GM12878 (cell line): ENCODE measurements at regions of chr1 and their contacts with region 1.

Region 1: DNA sequence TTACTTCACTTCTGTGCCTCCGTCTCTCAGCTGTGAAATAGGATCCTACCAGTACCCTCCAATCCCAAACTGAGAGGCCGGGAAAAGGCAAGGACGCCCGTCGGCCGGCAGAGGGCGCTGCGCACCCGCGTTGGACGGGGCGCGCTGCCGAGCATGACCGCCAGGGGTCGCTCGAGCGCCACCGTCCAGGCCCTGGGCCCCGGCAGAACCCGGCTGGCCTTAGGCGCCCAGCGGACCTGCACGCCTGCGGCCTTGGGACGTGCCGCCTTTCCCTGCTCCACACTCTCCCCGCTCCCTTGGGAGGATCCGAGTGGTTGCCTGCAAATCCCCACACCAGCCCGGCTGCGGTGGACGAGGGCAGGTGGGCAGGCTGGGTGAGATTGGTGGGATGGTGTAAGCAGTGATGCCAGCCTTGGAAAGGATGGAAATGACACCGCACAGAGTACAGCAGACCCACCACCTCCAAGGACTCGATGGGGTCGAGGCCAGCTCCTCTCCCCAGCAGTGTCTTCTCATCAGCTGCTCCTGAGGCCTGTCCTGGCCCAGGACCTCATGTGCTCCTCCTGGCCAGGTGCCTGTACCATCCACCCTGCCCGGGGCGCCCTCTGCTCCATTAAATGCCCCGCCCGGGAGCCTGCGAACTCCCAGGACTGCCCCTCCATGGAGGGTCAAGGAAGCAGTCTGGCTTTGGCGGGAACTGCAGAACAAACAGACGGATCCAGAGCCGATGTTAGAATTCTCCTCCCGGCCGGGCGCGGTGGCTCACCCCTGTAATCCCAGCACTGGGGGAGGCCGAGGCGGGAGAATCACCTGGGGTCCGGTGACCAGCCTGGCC is 47.4 kb upstream of the LBR start:
- DNase-seq: no peak
- ATAC-seq: peak; percentile 86
- H3K4me3 ChIP-seq: no peak overlapping the region
- H3K27ac ChIP-seq: no peak overlapping the region
- H3K4me1 ChIP-seq: peaks cover 21% of the 10 kb centered on the region
- H3K27me3 ChIP-seq: no peaks in the 10 kb centered on the region
- CTCF ChIP-seq: peak; percentile 99 to 100 (median 100); a peak in 5 of 6 replicates
- EP300 ChIP-seq: no peak
- POLR2A ChIP-seq: no peak
- RAD21 ChIP-seq: peak; percentile 99

Region 2: GRCh38 chr1:225413708-225414375 is 61.4 kb before region 1 on chr1:
- CTCF ChIA-PET with region 1: no interaction called
- POLR2A ChIA-PET with region 1: no interaction called
- RAD21 ChIA-PET with region 1: no interaction called
- SMC1A ChIA-PET with region 1: no interaction called
- in situ Hi-C with region 1: no loop called
- intact Hi-C with region 1: no loop called
- DNase-seq: no peak
- ATAC-seq: no peak; the same call in 2 of the 3 replicates
- H3K4me3 ChIP-seq: no peak overlapping the region
- H3K27ac ChIP-seq: no peak overlapping the region
- H3K4me1 ChIP-seq: no peaks in the 10 kb centered on the region
- H3K27me3 ChIP-seq: no peaks in the 10 kb centered on the region
- CTCF ChIP-seq: peak in 1 of 3 experiments; percentile 13; a peak in 1 of 6 replicates
- EP300 ChIP-seq: no peak
- POLR2A ChIP-seq: no peak
- RAD21 ChIP-seq: no peak

Region 3: DNA sequence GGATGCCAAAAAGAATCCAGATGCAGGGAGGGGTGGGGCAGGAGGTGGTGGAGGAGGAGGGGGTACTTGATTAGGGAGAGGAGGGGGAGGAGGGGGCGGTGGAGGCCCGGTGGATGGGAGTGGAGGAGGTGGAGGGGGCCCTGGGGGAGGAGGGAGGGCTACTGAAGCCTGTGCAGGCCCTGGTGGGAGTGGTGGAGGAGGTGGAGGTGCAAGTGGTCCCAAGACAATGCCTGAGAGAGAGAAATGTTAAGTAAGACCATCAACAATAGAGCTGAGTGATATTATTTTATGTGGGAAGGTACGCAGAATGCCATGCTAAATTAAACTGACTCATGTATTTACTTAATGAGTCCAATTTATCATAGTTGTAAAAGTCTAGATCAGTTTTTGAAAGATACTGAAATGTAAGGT is 39.5 kb after region 1 on chr1:
- CTCF ChIA-PET with region 1: no interaction called
- POLR2A ChIA-PET with region 1: no interaction called
- RAD21 ChIA-PET with region 1: no interaction called
- SMC1A ChIA-PET with region 1: no interaction called
- in situ Hi-C with region 1: no loop called
- intact Hi-C with region 1: no loop called
- DNase-seq: no peak
- ATAC-seq: no peak
- H3K4me3 ChIP-seq: no peak overlapping the region
- H3K27ac ChIP-seq: no peak overlapping the region
- H3K4me1 ChIP-seq: no peaks in the 10 kb centered on the region
- H3K27me3 ChIP-seq: peaks cover 0 to 3% of the 10 kb centered on the region in 2 experiments; a peak in 2 of 4 replicates
- CTCF ChIP-seq: no peak
- EP300 ChIP-seq: no peak
- POLR2A ChIP-seq: no peak
- RAD21 ChIP-seq: no peak

Region 4: GRCh38 chr1:225533238-225533637 is 58.0 kb after region 1 on chr1:
- CTCF ChIA-PET with region 1: no interaction called
- POLR2A ChIA-PET with region 1: no interaction called
- RAD21 ChIA-PET with region 1: no interaction called
- SMC1A ChIA-PET with region 1: no interaction called
- in situ Hi-C with region 1: no loop called
- intact Hi-C with region 1: no loop called
- DNase-seq: no peak
- ATAC-seq: no peak
- H3K4me3 ChIP-seq: no peak overlapping the region
- H3K27ac ChIP-seq: no peak overlapping the region
- H3K4me1 ChIP-seq: no peaks in the 10 kb centered on the region
- H3K27me3 ChIP-seq: no peaks in the 10 kb centered on the region
- CTCF ChIP-seq: no peak
- EP300 ChIP-seq: no peak
- POLR2A ChIP-seq: no peak
- RAD21 ChIP-seq: no peak

Region 5: GRCh38 chr1:225652729-225653462 is 177.7 kb after region 1 on chr1 and contains the start of gene ENAH:
- CTCF ChIA-PET with region 1: no interaction called
- POLR2A ChIA-PET with region 1: no interaction called
- RAD21 ChIA-PET with region 1: no interaction called
- SMC1A ChIA-PET with region 1: no interaction called
- in situ Hi-C with region 1: no loop called
- intact Hi-C with region 1: loop called (anchors 10 kb)
- DNase-seq: no peak
- ATAC-seq: peak; percentile 82
- H3K4me3 ChIP-seq: peak within 1 kb of the TSS; percentile 35
- H3K27ac ChIP-seq: no peak within 1 kb of the TSS
- H3K4me1 ChIP-seq: peaks cover 3% of the 10 kb centered on the region; the same call in 1 of the 2 replicates
- H3K27me3 ChIP-seq: peaks cover 6 to 15% of the 10 kb centered on the region in 2 experiments
- CTCF ChIP-seq: no peak
- EP300 ChIP-seq: no peak
- POLR2A ChIP-seq: no peak
- RAD21 ChIP-seq: no peak
- polyA plus RNA-seq, gene ENAH: not detected

Region 6: GRCh38 chr1:225777583-225778336 is 302.6 kb after region 1 on chr1 and contains the start of gene SRP9:
- CTCF ChIA-PET with region 1: interaction called, 9 read pairs
- POLR2A ChIA-PET with region 1: no interaction called
- RAD21 ChIA-PET with region 1: interaction called, 3 read pairs
- SMC1A ChIA-PET with region 1: interaction called, 3 read pairs
- in situ Hi-C with region 1: loop called (anchors 10 kb)
- intact Hi-C with region 1: loop called (anchors 1 kb)
- DNase-seq: peak; percentile 97
- ATAC-seq: peak; percentile 99
- H3K4me3 ChIP-seq: peak within 1 kb of the TSS; percentile 87
- H3K27ac ChIP-seq: peak within 1 kb of the TSS; percentile 96
- H3K4me1 ChIP-seq: no peaks in the 10 kb centered on the region
- H3K27me3 ChIP-seq: no peaks in the 10 kb centered on the region
- CTCF ChIP-seq: peak; percentile 92 to 98 (median 93)
- EP300 ChIP-seq: no peak; a peak in 1 of 4 replicates
- POLR2A ChIP-seq: peak; percentile 92
- RAD21 ChIP-seq: peak; percentile 49
- polyA plus RNA-seq, gene SRP9: 912 to 1,200 TPM

Region 7: GRCh38 chr1:225911191-225912130 is 436.3 kb after region 1 on chr1:
- CTCF ChIA-PET with region 1: interaction called, 8 read pairs
- POLR2A ChIA-PET with region 1: no interaction called
- RAD21 ChIA-PET with region 1: interaction called, 3 read pairs
- SMC1A ChIA-PET with region 1: interaction called, 4 read pairs
- in situ Hi-C with region 1: loop called (anchors 5 kb)
- intact Hi-C with region 1: loop called (anchors 1 kb)
- DNase-seq: no peak
- ATAC-seq: peak; percentile 97
- H3K4me3 ChIP-seq: no peak overlapping the region
- H3K27ac ChIP-seq: no peak overlapping the region
- H3K4me1 ChIP-seq: peaks cover 4% of the 10 kb centered on the region; the same call in 1 of the 2 replicates
- H3K27me3 ChIP-seq: no peaks in the 10 kb centered on the region
- CTCF ChIP-seq: peak; percentile 78 to 81 (median 78)
- EP300 ChIP-seq: no peak
- POLR2A ChIP-seq: no peak
- RAD21 ChIP-seq: peak; percentile 81

Region 8: GRCh38 chr1:226186124-226187018 is 711.2 kb after region 1 on chr1 and contains the start of gene ACBD3:
- CTCF ChIA-PET with region 1: no interaction called
- POLR2A ChIA-PET with region 1: no interaction called
- RAD21 ChIA-PET with region 1: no interaction called
- SMC1A ChIA-PET with region 1: no interaction called
- in situ Hi-C with region 1: no loop called
- intact Hi-C with region 1: loop called (anchors 10 kb)
- DNase-seq: peak; percentile 41
- ATAC-seq: peak; percentile 92
- H3K4me3 ChIP-seq: peak within 1 kb of the TSS; percentile 94
- H3K27ac ChIP-seq: peak within 1 kb of the TSS; percentile 88
- H3K4me1 ChIP-seq: peaks cover 7% of the 10 kb centered on the region; the same call in 1 of the 2 replicates
- H3K27me3 ChIP-seq: no peaks in the 10 kb centered on the region
- CTCF ChIP-seq: no peak; a peak in 1 of 6 replicates
- EP300 ChIP-seq: no peak
- POLR2A ChIP-seq: peak; percentile 100
- RAD21 ChIP-seq: no peak
- polyA plus RNA-seq, gene ACBD3: 7.5 to 8.9 TPM